Ovary (tissue), 10 donors: ENCODE measurements at regions of chr12 and their contacts with region 1.

Region 1: GRCh38 chr12:15590180-15590826 is 198.9 kb downstream of the EPS8 start:
- DNase-seq: peak; percentile 42 to 61 (median 52)
- H3K4me3 ChIP-seq: peak overlapping the region; percentile 21
- H3K27ac ChIP-seq: no peak overlapping the region
- H3K4me1 ChIP-seq: peaks cover 3% of the 10 kb centered on the region
- H3K27me3 ChIP-seq: no peaks in the 10 kb centered on the region
- CTCF ChIP-seq: peak; percentile 76 to 96 (median 93)
- EP300 ChIP-seq: no peak
- POLR2A ChIP-seq: no peak

Region 2: DNA sequence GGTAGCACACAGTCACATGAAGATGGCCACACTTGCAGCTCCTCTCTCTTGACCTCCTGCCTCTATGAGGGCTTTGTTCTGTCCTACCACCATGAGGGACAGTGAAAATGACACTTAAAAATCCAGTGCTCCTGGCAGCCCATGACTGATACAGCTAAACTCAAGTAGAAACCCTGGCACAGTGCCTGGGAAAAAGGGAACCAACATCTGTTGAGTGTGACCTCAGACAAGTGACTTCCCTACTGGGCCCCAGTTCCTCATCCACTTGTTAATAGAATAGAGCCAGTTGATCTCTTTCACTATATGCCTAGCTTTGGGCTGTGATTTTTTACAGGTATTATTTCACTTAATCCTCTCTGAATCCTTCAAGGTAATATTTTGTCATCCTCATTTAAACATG is 898.7 kb before region 1 on chr12:
- intact Hi-C with region 1: no loop called
- DNase-seq: peak in 1 of 5 donors; percentile 19
- H3K4me3 ChIP-seq: no peak overlapping the region
- H3K27ac ChIP-seq: no peak overlapping the region
- H3K4me1 ChIP-seq: no peaks in the 10 kb centered on the region
- H3K27me3 ChIP-seq: no peaks in the 10 kb centered on the region
- CTCF ChIP-seq: no peak
- EP300 ChIP-seq: no peak
- POLR2A ChIP-seq: no peak

Region 3: DNA sequence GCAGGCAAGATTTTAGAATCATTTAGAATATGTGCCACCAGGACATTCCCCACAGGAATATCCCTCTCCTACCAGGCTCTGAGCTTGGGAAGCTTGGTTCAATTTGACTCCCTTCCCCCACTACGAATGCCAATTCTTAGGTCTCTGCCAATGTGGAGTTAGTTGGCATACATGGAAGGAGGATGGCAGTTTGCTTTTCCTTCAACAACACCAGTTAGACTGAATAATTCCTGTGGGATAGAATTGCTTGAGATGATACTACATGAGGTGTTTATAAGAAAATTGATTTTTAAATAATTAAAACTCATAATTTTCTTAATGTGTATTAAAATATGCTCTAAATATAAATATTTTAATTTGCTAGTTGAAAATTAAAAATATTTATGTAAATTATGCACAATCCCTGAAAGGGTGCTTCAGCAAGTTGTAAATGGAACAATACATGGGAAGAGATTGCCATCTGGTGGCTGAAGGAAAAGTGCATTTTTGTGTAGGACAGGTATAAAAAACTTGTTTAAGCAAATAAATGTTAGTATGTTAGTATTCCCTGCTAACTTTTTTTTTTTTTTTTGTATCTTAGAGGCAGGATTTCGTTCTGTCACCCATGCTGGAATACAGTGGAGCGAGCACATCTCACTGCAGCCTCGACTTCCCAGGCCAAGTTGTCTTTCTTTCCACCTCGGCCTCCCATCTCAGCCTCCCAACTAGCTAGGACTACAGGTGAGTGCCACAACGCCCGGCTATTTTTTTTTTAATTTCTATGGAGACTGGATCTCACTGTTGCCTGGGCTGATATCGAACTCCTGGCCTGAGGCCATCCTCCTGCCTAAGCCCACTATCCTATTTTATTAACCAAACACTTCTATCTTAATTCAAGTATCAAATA is 266.0 kb after region 1 on chr12:
- intact Hi-C with region 1: loop called (anchors 2 kb)
- DNase-seq: peak in 4 of 5 donors; percentile 28 to 66 (median 34)
- H3K4me3 ChIP-seq: no peak overlapping the region
- H3K27ac ChIP-seq: no peak overlapping the region
- H3K4me1 ChIP-seq: peaks cover 1% of the 10 kb centered on the region
- H3K27me3 ChIP-seq: no peaks in the 10 kb centered on the region
- CTCF ChIP-seq: peak; percentile 57 to 95 (median 84)
- EP300 ChIP-seq: no peak
- POLR2A ChIP-seq: no peak